Caco-2 (cell line): ENCODE measurements at regions of chr20 and their contacts with region 1.

Region 1: GRCh38 chr20:8320306-8320705 is 188.2 kb downstream of the PLCB1 start:
- DNase-seq: no peak
- H3K4me3 ChIP-seq: no peak overlapping the region
- H3K4me3 Mint-ChIP-seq: no peak overlapping the region
- H3K27ac Mint-ChIP-seq: no peak overlapping the region
- H3K4me1 ChIP-seq: 0 out of 2 replicates have a peak, but pooled peaks cover 7% of the 10 kb centered on the region
- H3K4me1 Mint-ChIP-seq: peaks cover 5% of the 10 kb centered on the region
- H3K27me3 ChIP-seq: no peaks in the 10 kb centered on the region
- H3K27me3 Mint-ChIP-seq: no peaks in the 10 kb centered on the region
- CTCF ChIP-seq: no peak

Region 2: DNA sequence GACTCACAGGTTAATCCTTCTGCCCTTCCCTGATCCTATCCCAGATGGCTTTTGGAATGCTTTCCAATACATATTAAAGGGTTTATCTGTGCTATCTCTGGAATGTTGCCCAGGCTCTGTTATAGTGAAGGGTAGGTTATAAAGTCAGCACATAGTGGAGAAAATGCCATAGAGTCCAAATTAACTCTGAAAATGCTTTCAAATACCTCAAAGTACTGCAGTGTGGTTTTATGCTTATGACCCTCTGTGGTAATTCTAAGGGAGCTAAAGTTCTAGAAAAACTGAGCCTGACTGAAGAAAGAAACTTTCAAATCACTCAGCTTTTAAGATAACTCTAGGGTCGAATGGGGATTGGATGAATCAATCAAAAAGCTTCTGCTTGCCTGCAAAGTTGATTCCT is 28.4 kb before region 1 on chr20:
- CTCF ChIA-PET with region 1: no interaction called
- POLR2A ChIA-PET with region 1: no interaction called
- intact Hi-C with region 1: no loop called
- DNase-seq: no peak
- H3K4me3 ChIP-seq: no peak overlapping the region
- H3K4me3 Mint-ChIP-seq: no peak overlapping the region
- H3K27ac Mint-ChIP-seq: no peak overlapping the region
- H3K4me1 ChIP-seq: peaks cover 18% of the 10 kb centered on the region
- H3K4me1 Mint-ChIP-seq: no peaks in the 10 kb centered on the region
- H3K27me3 ChIP-seq: no peaks in the 10 kb centered on the region
- H3K27me3 Mint-ChIP-seq: no peaks in the 10 kb centered on the region
- CTCF ChIP-seq: no peak

Region 3: GRCh38 chr20:8389381-8390036 is 69.2 kb after region 1 on chr20:
- CTCF ChIA-PET with region 1: no interaction called
- POLR2A ChIA-PET with region 1: no interaction called
- intact Hi-C with region 1: loop called (anchors 5 kb)
- DNase-seq: peak in 1 of 2 experiments; percentile 27
- H3K4me3 ChIP-seq: no peak overlapping the region
- H3K4me3 Mint-ChIP-seq: no peak overlapping the region
- H3K27ac Mint-ChIP-seq: no peak overlapping the region
- H3K4me1 ChIP-seq: peaks cover 27% of the 10 kb centered on the region
- H3K4me1 Mint-ChIP-seq: no peaks in the 10 kb centered on the region
- H3K27me3 ChIP-seq: no peaks in the 10 kb centered on the region
- H3K27me3 Mint-ChIP-seq: no peaks in the 10 kb centered on the region
- CTCF ChIP-seq: peak; percentile 7 to 56